ENCODE measurements at regions of chr21 and their contacts with region 1.

Region 1: DNA sequence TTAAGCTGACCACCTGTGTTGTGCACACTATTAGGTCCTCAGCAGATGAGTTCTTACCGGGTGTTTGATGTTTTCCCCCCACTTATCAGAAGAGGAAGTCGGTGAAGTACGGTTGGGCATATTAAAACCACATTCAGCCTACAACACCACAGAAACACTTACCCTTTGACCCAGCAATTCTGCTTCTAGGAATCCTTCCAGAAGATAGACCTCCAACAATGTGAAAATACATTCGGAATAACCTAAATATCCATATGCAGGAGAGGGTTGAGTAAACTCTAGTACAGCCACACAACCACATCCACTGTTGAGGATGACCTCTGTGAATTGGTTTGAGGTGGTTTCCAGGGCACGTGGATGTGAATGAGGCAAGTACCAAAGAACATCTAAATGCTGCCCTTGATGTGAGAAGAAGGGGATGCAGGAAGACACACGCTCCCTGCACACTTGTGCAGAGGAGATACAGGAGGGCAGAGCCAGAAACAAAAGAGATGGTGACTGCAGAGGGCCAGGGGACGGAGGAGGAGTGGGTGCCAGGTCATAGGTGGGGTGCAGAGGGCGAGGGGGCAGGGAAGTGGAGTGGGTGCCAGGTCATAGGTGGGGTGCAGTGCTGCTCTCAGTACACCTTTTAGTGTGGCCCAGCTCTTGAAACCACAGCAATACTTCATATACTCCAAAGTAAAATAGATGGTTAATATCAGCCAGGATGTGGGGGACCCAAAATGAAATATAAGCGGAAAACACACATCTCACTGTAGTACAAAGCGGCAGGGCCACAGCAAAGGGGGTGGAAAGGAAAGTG is 12.8 kb downstream of the ADARB1 start:
- DNase-seq: no peak
- H3K4me3 Mint-ChIP-seq: peak overlapping the region; percentile 56
- H3K27ac Mint-ChIP-seq: peak overlapping the region; percentile 77
- H3K4me1 Mint-ChIP-seq: peaks cover 80% of the 10 kb centered on the region
- H3K27me3 Mint-ChIP-seq: no peaks in the 10 kb centered on the region

Region 2: DNA sequence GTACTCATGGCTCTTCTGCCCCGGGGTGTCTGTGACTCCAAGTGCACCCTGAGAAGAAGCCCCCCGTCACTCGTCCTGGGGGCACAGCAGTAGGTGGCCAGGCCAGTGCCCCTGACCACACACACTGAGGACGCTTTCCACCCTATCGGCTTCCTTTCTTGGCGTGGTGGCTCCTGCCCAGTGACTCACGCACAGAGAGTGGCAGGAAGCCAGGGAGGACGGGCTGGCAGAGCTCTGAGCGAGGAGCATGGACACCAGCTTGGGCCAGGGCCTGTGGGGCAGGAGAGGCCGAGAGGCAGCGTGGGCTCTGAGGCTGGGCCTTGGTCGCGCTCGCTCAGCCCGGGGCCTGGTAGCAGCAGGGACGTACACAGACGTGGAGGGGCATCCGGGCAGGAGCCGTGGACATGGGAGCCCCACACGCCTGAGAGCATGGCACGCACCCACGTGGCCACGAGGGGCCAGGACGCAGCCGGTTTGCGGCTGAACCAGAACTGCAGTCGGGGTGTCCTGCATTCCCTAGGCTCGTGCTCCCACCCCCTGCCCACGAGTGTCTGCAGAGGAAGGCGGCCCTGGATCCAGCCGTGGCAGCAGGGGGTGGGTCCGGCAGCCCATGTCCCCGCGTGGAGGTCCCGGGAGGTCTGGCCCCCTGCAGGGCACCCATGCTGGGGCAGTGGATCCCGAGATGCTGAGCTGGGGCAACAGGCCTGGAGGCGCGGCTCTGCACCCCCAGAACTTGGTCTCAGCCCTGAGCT is 86.1 kb before region 1 on chr21:
- intact Hi-C with region 1: no loop called
- DNase-seq: no peak
- H3K4me3 Mint-ChIP-seq: no peak overlapping the region
- H3K27ac Mint-ChIP-seq: no peak overlapping the region
- H3K4me1 Mint-ChIP-seq: peaks cover 4% of the 10 kb centered on the region
- H3K27me3 Mint-ChIP-seq: peaks cover 5% of the 10 kb centered on the region

Region 3: GRCh38 chr21:45011911-45012660 is 75.1 kb before region 1 on chr21:
- intact Hi-C with region 1: no loop called
- DNase-seq: no peak
- H3K4me3 Mint-ChIP-seq: no peak overlapping the region
- H3K27ac Mint-ChIP-seq: no peak overlapping the region
- H3K4me1 Mint-ChIP-seq: no peaks in the 10 kb centered on the region
- H3K27me3 Mint-ChIP-seq: peaks cover 55% of the 10 kb centered on the region

Region 4: GRCh38 chr21:45104560-45104959 is 17.3 kb after region 1 on chr21:
- intact Hi-C with region 1: loop called (anchors 2 kb)
- DNase-seq: no peak
- H3K4me3 Mint-ChIP-seq: no peak overlapping the region
- H3K27ac Mint-ChIP-seq: no peak overlapping the region
- H3K4me1 Mint-ChIP-seq: peaks cover 57% of the 10 kb centered on the region
- H3K27me3 Mint-ChIP-seq: no peaks in the 10 kb centered on the region

Measured in activated T-helper 2 cell treated with anti-CD3 and anti-CD28 coated beads, Interferon-gamma antibody, Interleukin-2, Interleukin-4, amounts not matched to agents 10 μg/mL and 5 μg/mL and 100 μg/mL, durations not matched to agents 14 hours and 24 hours and 36 hours (primary cell).